ENCODE measurements at regions of chr10 and their contacts with region 1.

Region 1: GRCh38 chr10:69639291-69640195 is 9.5 kb downstream of the FAM241B start:
- DNase-seq: peak; percentile 81
- ATAC-seq: peak; percentile 76
- H3K4me3 Mint-ChIP-seq: no peak overlapping the region
- H3K27ac Mint-ChIP-seq: 0 out of 2 replicates have a peak overlapping the region, but pooled peaks have one; percentile 4
- H3K4me1 Mint-ChIP-seq: peaks cover 13% of the 10 kb centered on the region
- H3K27me3 Mint-ChIP-seq: no peaks in the 10 kb centered on the region; the same call in 1 of the 2 replicates
- CTCF ChIP-seq: peak; percentile 89

Region 2: GRCh38 chr10:69408318-69409175 is 231.0 kb before region 1 on chr10:
- CTCF ChIA-PET with region 1: interaction called, 24 read pairs
- POLR2A ChIA-PET with region 1: no interaction called
- DNase-seq: peak; percentile 94
- ATAC-seq: peak; percentile 71
- H3K4me3 Mint-ChIP-seq: peak overlapping the region; percentile 49
- H3K27ac Mint-ChIP-seq: peak overlapping the region; percentile 72; the same call in 1 of the 2 replicates
- H3K4me1 Mint-ChIP-seq: peaks cover 42% of the 10 kb centered on the region
- H3K27me3 Mint-ChIP-seq: peaks cover 7% of the 10 kb centered on the region
- CTCF ChIP-seq: peak; percentile 62

Region 3: GRCh38 chr10:69567920-69568319 is 71.6 kb before region 1 on chr10:
- CTCF ChIA-PET with region 1: interaction called, 117 read pairs
- POLR2A ChIA-PET with region 1: no interaction called
- DNase-seq: peak; percentile 83
- ATAC-seq: peak; percentile 13
- H3K4me3 Mint-ChIP-seq: peak overlapping the region; percentile 88
- H3K27ac Mint-ChIP-seq: no peak overlapping the region
- H3K4me1 Mint-ChIP-seq: peaks cover 40% of the 10 kb centered on the region
- H3K27me3 Mint-ChIP-seq: peaks cover 97% of the 10 kb centered on the region
- CTCF ChIP-seq: no peak

Region 4: GRCh38 chr10:69579464-69580060 is 60.0 kb before region 1 on chr10:
- CTCF ChIA-PET with region 1: interaction called, 117 read pairs
- POLR2A ChIA-PET with region 1: no interaction called
- DNase-seq: no peak
- ATAC-seq: no peak
- H3K4me3 Mint-ChIP-seq: peak overlapping the region; percentile 75
- H3K27ac Mint-ChIP-seq: no peak overlapping the region
- H3K4me1 Mint-ChIP-seq: peaks cover 42% of the 10 kb centered on the region
- H3K27me3 Mint-ChIP-seq: peaks cover 75% of the 10 kb centered on the region
- CTCF ChIP-seq: no peak

Region 5: DNA sequence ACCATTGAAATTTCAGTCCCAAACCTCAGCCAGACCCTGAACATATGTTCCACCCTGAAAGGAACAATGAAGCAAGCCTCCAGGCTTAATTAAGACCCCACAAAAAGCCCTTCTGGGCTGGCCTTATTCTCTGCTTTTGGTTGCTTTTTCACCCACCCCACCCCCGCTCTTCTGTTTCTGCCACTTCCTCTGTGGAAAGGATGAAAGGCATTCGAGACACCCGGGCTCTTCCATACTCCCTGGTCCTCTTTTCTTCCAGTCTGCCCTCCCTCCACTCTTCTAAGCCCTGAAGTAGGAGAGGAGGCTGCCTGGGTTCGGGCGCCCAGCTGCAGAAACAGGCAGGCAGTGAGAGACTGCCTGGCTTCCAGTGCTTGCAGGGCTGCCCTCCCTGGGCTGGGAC is 18.9 kb before region 1 on chr10:
- CTCF ChIA-PET with region 1: interaction called, 10 read pairs
- POLR2A ChIA-PET with region 1: no interaction called
- DNase-seq: no peak
- ATAC-seq: 0 out of 2 replicates have a peak, but pooled peaks have one; percentile 24
- H3K4me3 Mint-ChIP-seq: no peak overlapping the region
- H3K27ac Mint-ChIP-seq: no peak overlapping the region
- H3K4me1 Mint-ChIP-seq: peaks cover 5% of the 10 kb centered on the region; the same call in 1 of the 2 replicates
- H3K27me3 Mint-ChIP-seq: peaks cover 10% of the 10 kb centered on the region
- CTCF ChIP-seq: no peak

Region 6: DNA sequence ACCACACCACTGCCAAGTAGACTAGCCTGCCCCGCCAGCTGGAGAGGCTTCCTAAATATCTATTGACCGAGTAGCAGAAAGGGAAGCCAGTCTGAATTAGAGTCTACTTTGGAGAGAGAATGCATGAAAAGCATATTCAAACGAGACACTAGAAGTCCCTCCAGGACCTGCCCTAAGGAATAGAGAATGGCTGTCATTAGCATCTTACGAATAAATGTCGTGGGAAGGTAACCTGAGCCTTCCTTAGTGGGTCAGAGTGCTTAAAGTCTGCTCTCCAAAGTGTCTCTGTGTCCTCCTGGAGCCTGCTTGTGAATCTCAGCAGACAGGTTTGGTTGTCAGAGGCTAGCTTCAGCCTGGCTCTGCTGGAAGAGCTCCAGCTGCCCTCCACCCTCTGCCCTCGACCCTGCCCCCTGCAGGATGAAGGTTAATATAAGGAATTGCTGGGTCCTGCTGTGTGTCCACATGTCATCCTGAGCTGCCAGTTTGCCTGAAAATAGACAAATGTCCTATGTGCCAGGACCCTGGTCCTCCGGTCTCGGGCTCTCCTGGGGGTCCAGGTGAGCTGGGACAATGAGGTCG is 23.9 kb after region 1 on chr10:
- CTCF ChIA-PET with region 1: interaction called, 256 read pairs
- POLR2A ChIA-PET with region 1: no interaction called
- DNase-seq: peak; percentile 63
- ATAC-seq: peak; percentile 88
- H3K4me3 Mint-ChIP-seq: no peak overlapping the region
- H3K27ac Mint-ChIP-seq: no peak overlapping the region
- H3K4me1 Mint-ChIP-seq: peaks cover 27% of the 10 kb centered on the region
- H3K27me3 Mint-ChIP-seq: peaks cover 9% of the 10 kb centered on the region
- CTCF ChIP-seq: no peak